ENCODE measurements at regions of chr7 and their contacts with region 1.

Region 1: GRCh38 chr7:44460325-44460724 is 30.1 kb downstream of the NUDCD3 start:
- DNase-seq: peak; percentile 88
- H3K4me3 Mint-ChIP-seq: peak overlapping the region; percentile 72
- H3K27ac Mint-ChIP-seq: peak overlapping the region; percentile 88
- H3K4me1 Mint-ChIP-seq: peaks cover 58% of the 10 kb centered on the region
- H3K27me3 Mint-ChIP-seq: no peaks in the 10 kb centered on the region

Region 2: DNA sequence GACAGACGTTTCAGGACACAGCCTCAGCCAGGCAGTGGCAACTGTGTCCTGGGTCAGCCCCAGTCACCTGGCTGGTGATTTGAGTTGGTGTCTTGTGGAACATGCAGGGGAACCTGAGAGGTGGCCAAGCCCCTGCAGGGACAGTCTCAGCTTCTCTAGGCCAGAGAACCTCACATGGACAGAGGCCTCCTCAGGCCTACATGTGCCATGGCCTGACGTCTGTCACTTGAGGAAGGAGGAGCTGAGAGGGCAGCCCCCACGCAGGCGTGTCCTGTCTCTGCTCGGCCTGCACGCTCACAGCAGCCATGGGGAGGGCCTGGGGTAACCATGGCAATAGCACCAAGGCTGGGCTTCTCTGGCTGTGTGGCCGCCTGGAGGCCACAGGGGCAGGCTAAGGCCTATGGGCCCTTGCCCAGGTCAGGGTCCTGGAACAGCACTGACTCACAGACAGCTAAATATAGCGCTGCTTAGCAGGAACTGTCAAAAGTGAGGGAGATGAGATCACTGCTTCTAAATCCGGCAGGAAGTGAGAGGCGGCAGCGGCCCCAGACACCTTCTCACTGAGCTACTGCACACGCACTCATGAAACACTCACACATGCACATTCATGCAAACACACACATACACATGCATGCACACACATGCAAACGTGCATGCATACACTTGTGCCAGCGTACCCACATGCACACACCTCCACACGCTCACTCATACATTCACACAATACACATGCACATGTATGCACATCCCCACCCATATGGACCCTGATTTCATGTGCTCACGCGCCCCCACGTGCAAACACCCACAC is 202.5 kb before region 1 on chr7:
- intact Hi-C with region 1: loop called (anchors 1 kb)
- DNase-seq: peak; percentile 90
- H3K4me3 Mint-ChIP-seq: peak overlapping the region; percentile 54
- H3K27ac Mint-ChIP-seq: peak overlapping the region; percentile 95
- H3K4me1 Mint-ChIP-seq: peaks cover 37% of the 10 kb centered on the region
- H3K27me3 Mint-ChIP-seq: no peaks in the 10 kb centered on the region

Region 3: DNA sequence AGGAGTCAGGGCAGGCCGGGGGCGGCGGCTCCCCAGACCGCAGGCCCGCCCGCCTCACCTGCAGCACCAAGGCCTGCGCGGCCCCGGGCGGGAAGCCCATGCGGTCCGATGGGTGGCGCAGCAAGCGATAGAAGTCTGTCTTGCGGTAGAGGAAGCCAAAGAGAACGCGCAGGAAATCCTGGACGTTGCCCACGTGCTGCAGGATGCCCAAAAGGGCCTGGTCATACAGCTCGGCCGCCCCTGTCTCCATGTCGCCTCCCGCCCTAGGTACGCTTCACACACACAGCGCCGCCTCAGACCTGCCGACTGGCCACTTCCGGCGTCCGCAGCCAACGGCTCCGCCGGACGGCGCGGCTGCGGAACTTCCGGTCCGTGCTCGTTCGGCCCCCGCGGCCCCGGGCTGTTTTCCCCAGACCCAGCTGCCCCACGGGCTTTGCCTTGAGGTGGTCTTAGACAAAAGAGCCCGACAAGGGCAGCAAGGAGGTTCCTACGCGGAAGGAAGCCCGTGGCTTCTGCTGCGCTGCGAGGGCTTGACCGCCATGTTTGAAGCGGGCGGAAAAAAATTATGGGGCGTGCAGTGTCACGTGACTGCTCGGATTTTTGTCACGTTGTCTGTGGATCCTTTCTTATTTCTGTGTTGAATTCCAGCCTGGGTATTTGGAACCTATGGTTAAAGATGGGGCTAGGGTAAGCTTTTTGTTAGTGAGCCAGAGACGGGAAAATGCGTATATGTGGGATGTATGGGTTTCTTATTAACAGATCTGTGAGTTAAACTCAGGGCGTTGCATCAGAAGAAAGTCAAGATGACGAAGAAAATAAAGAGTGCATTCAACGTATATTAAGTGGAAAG is 30.3 kb after region 1 on chr7 and contains the start of gene NUDCD3:
- intact Hi-C with region 1: loop called (anchors 2 kb)
- DNase-seq: peak; percentile 95
- H3K4me3 Mint-ChIP-seq: peak within 1 kb of the TSS; percentile 85
- H3K27ac Mint-ChIP-seq: peak within 1 kb of the TSS; percentile 88
- H3K4me1 Mint-ChIP-seq: peaks cover 33% of the 10 kb centered on the region
- H3K27me3 Mint-ChIP-seq: no peaks in the 10 kb centered on the region
- total RNA-seq, gene NUDCD3: 88.8 and 92.7 TPM in 2 replicates

Measured in activated CD4-positive, alpha-beta T cell treated with anti-CD3 and anti-CD28 coated beads, Interleukin-2, amount 10 ng/mL, durations not matched to agents 24 days and 14 days (primary cell).